ENCODE measurements at regions of chr14 and their contacts with region 1.

Region 1: GRCh38 chr14:75278422-75279161 is at the start of gene FOS:
- DNase-seq: peak; percentile 96 to 98
- ATAC-seq: peak; percentile 70
- H3K4me3 ChIP-seq: peak within 1 kb of the TSS; percentile 65
- H3K27ac ChIP-seq: peak within 1 kb of the TSS; percentile 85 to 97
- H3K4me1 ChIP-seq: peaks cover 28% of the 10 kb centered on the region
- CTCF ChIP-seq: no peak
- EP300 ChIP-seq: no peak
- POLR2A ChIP-seq: peak; percentile 100
- RAD21 ChIP-seq: peak in 1 of 2 experiments; percentile 6; a peak in 2 of 5 replicates
- polyA plus RNA-seq, gene FOS: 197 and 256 TPM in 2 replicates

Region 2: DNA sequence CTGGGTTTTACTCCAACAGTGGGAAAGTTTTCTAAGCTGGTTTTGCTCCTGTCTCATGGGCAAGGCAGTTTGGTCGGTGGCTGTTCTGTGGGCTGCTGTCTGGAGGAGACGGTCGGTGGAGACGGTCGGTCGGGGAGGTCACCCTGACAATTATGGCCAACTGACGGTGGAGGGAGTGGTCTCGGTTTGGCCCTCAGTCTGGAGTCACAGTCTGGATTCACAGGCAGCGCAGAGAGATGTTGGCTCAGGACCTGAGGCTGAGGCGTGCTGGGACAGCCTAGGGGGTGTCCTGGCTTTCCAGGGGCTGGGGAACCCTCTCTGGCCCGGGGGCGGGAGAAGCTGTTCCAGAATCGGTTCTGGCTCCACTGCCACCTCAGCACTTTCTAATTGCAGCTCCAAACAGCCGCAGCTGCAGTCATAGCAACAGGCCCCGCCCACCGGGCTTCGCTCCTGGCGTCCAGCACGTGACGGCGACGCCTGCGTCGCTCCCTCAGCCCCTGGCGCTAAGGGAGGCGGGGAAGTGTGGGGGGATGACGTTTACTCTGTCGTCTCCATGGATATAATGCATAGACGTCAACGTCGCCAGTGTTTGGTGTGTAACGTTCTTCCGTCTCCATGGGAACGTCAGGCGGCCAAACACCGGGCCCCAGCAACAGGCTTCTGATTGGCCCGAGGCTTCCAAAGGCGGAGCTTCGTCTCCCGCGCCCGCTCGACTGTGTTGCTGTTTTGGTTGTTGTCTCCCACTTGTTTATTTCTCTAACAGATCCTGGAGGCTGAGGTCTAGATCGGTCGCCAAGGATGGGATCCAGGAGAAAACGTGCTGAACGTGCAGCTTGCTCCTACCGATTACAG is 19.8 kb before region 1 on chr14:
- CTCF ChIA-PET with region 1: interaction called, 10 read pairs
- POLR2A ChIA-PET with region 1: interaction called, 16 read pairs
- DNase-seq: peak; percentile 98 to 99
- ATAC-seq: peak; percentile 91 to 97
- H3K4me3 ChIP-seq: peak overlapping the region; percentile 37
- H3K27ac ChIP-seq: peak overlapping the region; percentile 83 to 88
- H3K4me1 ChIP-seq: peaks cover 27% of the 10 kb centered on the region
- CTCF ChIP-seq: no peak
- EP300 ChIP-seq: no peak
- POLR2A ChIP-seq: no peak
- RAD21 ChIP-seq: no peak; a peak in 1 of 5 replicates

Region 3: GRCh38 chr14:75267141-75267721 is 11.4 kb before region 1 on chr14:
- CTCF ChIA-PET with region 1: interaction called, 5 read pairs
- POLR2A ChIA-PET with region 1: interaction called, 14 read pairs
- DNase-seq: no peak
- ATAC-seq: peak in 1 of 2 experiments; percentile 38; a peak in 3 of 6 replicates
- H3K4me3 ChIP-seq: no peak overlapping the region
- H3K27ac ChIP-seq: no peak overlapping the region
- H3K4me1 ChIP-seq: 0 out of 3 replicates have a peak, but pooled peaks cover 3% of the 10 kb centered on the region
- CTCF ChIP-seq: no peak
- EP300 ChIP-seq: no peak
- POLR2A ChIP-seq: no peak
- RAD21 ChIP-seq: no peak

Region 4: DNA sequence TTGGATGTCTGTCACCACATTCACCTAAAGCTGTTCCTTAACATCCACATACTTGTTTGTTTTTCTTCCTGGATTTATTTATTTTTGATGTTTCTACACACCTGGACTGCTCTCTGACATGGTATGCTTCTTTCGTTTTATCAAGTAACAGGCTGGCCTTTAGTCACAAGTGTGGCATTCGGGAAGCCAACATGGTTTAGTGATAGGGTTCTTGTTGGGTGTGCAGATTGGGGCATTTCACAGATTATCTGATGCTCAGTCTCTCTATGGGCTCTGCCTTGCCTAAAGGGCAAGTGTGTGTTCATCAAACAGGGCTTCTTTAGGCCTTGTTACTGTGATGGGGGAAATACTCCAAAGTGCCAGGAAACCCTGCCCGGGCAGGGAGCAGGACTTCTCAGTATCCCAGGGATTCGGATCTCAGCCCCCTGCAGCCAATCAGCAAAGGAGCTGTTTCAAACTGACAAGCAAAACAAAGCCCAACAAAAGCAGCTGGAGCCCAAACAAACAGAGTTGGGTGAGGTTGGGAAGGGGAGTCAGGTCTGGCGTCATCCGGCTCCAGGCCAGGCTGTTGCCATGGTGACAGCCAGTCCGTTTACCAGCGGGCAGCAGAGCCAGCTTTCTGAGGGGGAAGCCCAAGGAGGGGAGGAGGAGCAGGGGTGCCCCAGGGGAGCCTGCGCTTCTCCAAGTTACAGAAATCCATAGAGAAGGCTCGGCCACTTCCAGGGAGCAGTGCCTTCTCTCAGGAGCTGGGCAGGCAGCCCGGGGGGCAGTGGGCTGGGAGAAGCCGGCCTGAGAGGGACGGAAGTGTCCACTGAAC is 31.9 kb after region 1 on chr14:
- CTCF ChIA-PET with region 1: no interaction called
- POLR2A ChIA-PET with region 1: no interaction called
- DNase-seq: peak; percentile 46 to 80
- ATAC-seq: peak; percentile 45 to 65; a peak in 5 of 6 replicates
- H3K4me3 ChIP-seq: no peak overlapping the region
- H3K27ac ChIP-seq: peak overlapping the region; percentile 55 to 58
- H3K4me1 ChIP-seq: peaks cover 29% of the 10 kb centered on the region
- CTCF ChIP-seq: no peak
- EP300 ChIP-seq: no peak
- POLR2A ChIP-seq: no peak
- RAD21 ChIP-seq: no peak

Region 5: DNA sequence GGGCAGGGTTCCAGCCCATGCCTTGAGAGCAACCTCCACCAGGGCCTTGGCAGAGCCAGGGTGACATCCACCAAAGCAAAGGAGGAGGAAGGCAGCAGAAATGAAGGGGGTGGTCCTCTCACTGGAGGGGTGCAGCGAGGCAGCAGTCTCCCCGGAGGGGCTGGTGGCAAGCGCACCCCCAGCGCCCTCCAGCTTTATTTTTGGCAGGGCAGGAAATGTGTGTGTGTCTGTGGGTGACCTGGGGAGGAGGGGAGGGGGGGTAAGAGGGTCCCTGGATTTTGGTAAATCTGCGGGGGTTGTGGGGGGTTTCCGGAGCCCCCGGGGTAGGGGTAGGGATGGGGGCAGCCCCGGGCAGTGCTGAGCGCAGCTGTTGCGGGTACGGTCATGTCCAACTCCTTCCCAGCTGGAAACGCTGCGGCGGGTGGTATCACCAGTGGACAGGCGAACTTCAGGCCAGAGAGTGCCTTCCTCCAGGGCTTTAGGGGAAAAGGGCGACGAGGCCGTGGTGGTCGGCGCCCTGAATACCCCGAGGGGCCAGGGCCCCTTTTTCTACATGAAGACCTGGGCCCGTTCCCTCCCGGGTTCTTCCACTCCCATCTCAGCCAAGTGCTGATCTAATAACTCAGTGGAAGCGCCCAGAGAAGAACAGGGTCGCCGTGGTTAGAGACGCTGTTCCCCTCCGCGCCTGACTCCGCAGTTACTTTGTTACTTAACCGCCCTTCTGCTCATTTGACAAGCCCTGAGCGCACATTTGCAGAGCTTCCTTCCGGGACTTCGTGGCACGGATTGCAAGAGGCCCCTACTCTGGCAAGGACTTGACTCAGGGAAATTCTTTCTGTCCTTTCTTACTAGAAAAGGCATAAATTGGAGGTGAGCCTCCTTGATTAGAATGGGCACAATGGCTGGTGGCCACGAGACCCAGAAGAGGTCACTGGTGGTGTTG is 55.3 kb after region 1 on chr14:
- CTCF ChIA-PET with region 1: no interaction called
- POLR2A ChIA-PET with region 1: no interaction called
- DNase-seq: no peak
- ATAC-seq: no peak
- H3K4me3 ChIP-seq: no peak overlapping the region
- H3K27ac ChIP-seq: no peak overlapping the region
- H3K4me1 ChIP-seq: no peaks in the 10 kb centered on the region
- CTCF ChIP-seq: no peak
- EP300 ChIP-seq: no peak
- POLR2A ChIP-seq: no peak
- RAD21 ChIP-seq: no peak